Heart left ventricle (tissue), 16 donors: ENCODE measurements at regions of chr19 and their contacts with region 1.

Region 1: DNA sequence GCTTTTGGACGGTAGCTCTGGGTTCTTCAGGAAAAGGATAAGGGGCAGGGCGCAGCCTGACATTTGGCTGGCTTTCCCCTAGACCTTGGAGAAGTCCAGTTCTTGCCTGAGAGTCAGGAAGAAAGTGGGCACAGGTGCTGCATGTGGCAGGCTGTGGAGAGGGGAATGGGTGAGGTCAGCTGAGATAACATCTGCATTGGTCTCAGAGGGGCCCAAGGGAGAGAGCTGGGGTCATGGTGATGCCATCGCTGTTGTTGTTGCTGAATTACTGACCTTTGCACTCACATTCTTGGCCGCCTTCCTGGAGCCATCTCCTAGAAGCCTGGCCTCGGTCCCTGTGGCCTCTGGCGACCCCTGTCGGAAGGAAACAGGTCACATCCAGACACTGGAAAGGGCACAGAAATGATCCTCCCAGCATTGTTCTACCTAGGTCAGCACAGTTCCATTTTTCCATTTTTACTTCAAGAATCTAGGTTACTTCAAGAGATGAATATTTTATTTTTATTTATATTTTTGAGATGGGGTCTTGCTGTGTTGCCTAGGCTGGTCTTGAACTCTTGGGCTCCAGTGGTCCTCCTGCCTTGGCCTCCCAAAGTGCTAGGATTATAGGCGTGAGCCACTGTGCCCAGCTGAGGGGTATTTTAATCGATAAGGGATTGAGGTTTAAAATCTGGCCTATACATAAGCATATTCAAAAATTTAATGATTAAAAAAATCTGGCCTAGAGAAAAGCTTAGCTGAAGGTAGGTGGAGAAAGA is 6.5 kb upstream of the LIPE start:
- DNase-seq: peak; percentile 87 to 92 (median 91)
- ATAC-seq: peak; percentile 87 to 91 (median 91)
- H3K4me3 ChIP-seq: no peak overlapping the region
- H3K27ac ChIP-seq: peak overlapping the region; percentile 1 to 88 (median 69)
- H3K4me1 ChIP-seq: peaks cover 0 to 35% (median 21%) of the 10 kb centered on the region in 12 donors
- H3K27me3 ChIP-seq: no peaks in the 10 kb centered on the region
- CTCF ChIP-seq: peak; percentile 61 to 85 (median 74)
- POLR2A ChIP-seq: no peak

Region 2: DNA sequence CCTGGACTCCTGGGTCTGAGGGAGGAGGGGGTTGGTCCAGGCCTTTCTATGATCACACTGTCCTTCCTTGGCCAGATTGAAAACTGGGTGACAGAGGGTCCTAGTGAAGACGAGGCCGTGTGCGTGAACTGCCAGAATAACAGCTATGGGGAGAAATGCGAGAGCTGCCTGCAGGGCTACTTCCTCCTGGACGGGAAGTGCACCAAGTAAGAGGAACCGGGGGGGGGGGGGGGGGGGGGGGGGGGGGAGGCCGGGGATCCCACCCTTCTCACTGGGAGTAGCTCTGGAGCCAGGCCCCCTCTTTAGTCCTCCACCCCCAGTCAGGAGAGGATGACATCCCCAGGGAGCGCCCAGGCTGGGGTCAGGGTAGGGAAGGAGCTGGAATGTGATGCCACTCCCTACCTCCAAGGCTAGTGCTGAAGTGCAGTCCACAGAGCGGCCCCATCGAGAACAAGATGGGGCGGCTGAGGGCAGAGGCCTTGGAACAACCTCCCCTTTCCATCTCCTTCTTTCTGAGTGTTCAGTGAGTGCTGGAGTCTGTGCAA is 63.0 kb before region 1 on chr19:
- intact Hi-C with region 1: no loop called
- DNase-seq: no peak
- ATAC-seq: no peak
- H3K4me3 ChIP-seq: no peak overlapping the region
- H3K27ac ChIP-seq: no peak overlapping the region
- H3K4me1 ChIP-seq: peaks cover 0 to 24% (median 8%) of the 10 kb centered on the region in 12 donors
- H3K27me3 ChIP-seq: no peaks in the 10 kb centered on the region
- CTCF ChIP-seq: no peak
- POLR2A ChIP-seq: no peak

Region 3: DNA sequence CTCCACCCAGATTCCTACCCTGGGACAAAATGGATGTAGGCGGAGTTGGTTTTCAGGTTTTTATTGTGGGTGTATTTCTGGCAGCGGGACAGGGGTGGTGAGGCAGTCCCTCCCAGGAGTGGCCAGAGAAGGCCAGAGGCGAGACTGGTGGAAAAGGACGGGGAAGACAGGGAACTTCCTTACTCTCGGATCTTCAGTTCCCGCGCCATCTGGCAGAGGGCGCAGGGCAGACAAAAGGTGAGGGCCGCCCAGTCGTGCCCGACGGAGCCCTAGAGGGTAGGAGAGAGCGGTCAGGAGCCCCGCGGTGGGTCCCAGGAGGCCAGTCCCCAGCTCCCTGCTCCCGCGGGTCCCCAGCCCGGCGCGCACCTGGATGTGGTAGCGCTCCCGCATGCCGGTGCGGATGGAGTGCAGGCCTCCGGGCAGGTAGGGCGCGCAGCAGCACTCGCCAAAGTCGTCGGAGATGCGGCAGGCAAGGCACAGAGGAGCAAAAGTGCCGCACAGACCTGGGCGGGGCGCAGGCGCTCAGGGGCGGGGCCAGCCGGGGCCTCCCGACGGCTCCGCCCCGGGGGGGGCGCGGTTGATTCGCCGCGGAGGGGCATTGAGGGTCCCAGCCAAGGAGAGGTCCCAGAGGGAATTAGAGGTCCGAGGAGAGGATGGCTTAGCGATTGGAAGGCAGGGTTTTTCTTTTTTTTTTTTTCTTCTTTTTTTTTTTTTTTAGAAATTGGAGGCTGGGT is 46.5 kb before region 1 on chr19:
- intact Hi-C with region 1: loop called in 1 of 10 experiments (anchors 5 kb)
- DNase-seq: peak; percentile 45 to 77 (median 65)
- ATAC-seq: peak; percentile 39 to 87 (median 80)
- H3K4me3 ChIP-seq: peak overlapping the region; percentile 20 to 59 (median 48)
- H3K27ac ChIP-seq: peak overlapping the region in 5 of 12 donors; percentile 3 to 37 (median 21)
- H3K4me1 ChIP-seq: peaks cover 0 to 9% (median 5%) of the 10 kb centered on the region in 12 donors
- H3K27me3 ChIP-seq: peaks cover 0 to 46% (median 14%) of the 10 kb centered on the region in 9 donors
- CTCF ChIP-seq: peak; percentile 37 to 67 (median 48)
- POLR2A ChIP-seq: no peak